ENCODE measurements at regions of chr1 and their contacts with region 1.

Region 1: DNA sequence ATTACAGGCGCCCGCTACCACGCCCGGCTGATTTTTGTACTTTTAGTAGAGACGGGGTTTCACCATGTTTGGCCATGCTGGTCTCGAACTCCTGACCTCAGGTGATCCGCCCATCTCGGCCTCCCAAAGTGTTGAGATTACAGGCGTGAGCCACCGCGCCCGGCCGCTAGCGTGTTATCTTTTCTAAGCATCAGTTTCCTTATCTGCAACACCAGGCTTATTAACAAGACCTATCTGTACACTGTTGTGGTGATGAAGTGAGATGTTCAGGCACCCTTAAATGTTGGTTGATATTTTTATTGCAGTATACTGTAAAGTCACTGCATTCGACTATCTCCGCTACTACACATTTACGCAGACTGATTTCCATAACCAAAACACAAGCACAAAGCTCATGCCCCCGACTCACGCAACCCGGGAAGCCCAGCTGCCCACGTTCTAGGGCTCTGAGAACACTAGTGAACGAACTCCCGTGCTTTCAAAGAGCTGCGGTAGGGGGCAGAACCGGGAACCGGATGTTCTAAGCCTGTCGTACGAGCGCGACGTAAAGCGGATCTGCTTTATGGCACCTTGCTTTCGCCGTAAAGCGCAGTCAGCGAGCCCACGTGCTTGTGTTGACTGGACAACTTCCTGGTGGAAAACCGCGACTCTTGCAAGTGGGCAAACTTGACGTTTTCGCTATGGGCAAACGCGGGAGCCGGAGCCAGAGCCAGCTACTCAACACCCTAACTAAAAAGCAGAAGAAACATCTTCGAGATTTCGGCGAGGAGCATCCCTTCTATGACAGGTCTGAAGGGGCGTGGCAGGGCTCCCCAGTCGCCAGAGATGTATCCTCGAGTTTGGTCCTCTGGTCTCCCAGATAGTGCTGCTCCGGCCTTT is at the start of gene UTP25:
- DNase-seq: peak; percentile 96
- ATAC-seq: peak; percentile 94
- H3K4me3 Mint-ChIP-seq: peak within 1 kb of the TSS; percentile 95
- H3K27ac Mint-ChIP-seq: peak within 1 kb of the TSS; percentile 86
- H3K4me1 Mint-ChIP-seq: peaks cover 33% of the 10 kb centered on the region
- H3K27me3 Mint-ChIP-seq: peaks cover 6% of the 10 kb centered on the region
- total RNA-seq, gene UTP25: 6.3 to 6.5 TPM

Region 2: DNA sequence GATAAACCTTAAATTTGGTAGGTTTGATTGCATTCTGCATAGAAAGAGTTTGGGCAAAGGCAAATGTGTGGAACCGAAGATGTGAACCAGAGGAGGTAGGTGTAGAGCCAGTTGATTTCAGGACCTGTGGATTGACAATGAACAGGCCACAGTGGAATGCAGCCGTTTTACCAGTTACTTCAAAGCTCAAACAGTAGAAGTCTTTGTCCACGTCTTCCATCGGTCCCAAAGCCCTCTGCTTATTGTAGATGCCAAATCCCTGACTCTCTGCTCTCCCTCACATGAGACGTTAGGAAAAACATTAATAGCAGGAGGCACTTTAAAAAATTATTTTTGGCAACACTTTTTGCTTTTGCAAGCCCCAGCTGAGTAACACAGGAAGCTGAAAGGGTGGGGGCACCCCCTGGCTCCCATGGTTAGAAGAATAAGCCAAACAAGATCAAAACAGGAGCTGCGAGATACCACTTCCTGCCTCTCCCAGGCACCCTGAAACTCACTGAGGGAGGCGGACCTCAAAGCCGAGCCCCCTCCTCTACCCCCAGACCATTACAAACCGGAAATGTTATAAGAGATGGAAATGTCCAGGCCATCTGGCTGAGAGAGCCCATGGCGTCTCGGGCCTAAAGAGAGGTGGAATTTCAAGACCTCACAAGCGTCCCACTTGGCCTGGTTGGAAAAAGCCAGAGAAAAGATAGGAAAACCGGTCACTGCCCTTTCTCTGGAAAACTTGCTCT is 58.3 kb before region 1 on chr1:
- CTCF ChIA-PET with region 1: interaction called, 13 read pairs
- POLR2A ChIA-PET with region 1: interaction called, 5 read pairs
- DNase-seq: peak; percentile 89
- ATAC-seq: peak; percentile 58
- H3K4me3 Mint-ChIP-seq: no peak overlapping the region
- H3K27ac Mint-ChIP-seq: no peak overlapping the region
- H3K4me1 Mint-ChIP-seq: peaks cover 36% of the 10 kb centered on the region
- H3K27me3 Mint-ChIP-seq: no peaks in the 10 kb centered on the region

Region 3: GRCh38 chr1:209784265-209785169 is 43.1 kb before region 1 on chr1 and contains the start of gene C1orf74:
- CTCF ChIA-PET with region 1: interaction called, 42 read pairs
- POLR2A ChIA-PET with region 1: interaction called, 3 read pairs
- DNase-seq: peak; percentile 99
- ATAC-seq: peak; percentile 99
- H3K4me3 Mint-ChIP-seq: peak within 1 kb of the TSS; percentile 94
- H3K27ac Mint-ChIP-seq: peak within 1 kb of the TSS; percentile 99
- H3K4me1 Mint-ChIP-seq: peaks cover 50% of the 10 kb centered on the region
- H3K27me3 Mint-ChIP-seq: no peaks in the 10 kb centered on the region
- total RNA-seq, gene C1orf74: 2.5 to 2.6 TPM

Region 4: GRCh38 chr1:209790286-209791193 is 37.1 kb before region 1 on chr1:
- CTCF ChIA-PET with region 1: interaction called, 42 read pairs
- POLR2A ChIA-PET with region 1: no interaction called
- DNase-seq: no peak
- ATAC-seq: no peak
- H3K4me3 Mint-ChIP-seq: no peak overlapping the region
- H3K27ac Mint-ChIP-seq: no peak overlapping the region
- H3K4me1 Mint-ChIP-seq: peaks cover 13% of the 10 kb centered on the region
- H3K27me3 Mint-ChIP-seq: peaks cover 2% of the 10 kb centered on the region

Region 5: DNA sequence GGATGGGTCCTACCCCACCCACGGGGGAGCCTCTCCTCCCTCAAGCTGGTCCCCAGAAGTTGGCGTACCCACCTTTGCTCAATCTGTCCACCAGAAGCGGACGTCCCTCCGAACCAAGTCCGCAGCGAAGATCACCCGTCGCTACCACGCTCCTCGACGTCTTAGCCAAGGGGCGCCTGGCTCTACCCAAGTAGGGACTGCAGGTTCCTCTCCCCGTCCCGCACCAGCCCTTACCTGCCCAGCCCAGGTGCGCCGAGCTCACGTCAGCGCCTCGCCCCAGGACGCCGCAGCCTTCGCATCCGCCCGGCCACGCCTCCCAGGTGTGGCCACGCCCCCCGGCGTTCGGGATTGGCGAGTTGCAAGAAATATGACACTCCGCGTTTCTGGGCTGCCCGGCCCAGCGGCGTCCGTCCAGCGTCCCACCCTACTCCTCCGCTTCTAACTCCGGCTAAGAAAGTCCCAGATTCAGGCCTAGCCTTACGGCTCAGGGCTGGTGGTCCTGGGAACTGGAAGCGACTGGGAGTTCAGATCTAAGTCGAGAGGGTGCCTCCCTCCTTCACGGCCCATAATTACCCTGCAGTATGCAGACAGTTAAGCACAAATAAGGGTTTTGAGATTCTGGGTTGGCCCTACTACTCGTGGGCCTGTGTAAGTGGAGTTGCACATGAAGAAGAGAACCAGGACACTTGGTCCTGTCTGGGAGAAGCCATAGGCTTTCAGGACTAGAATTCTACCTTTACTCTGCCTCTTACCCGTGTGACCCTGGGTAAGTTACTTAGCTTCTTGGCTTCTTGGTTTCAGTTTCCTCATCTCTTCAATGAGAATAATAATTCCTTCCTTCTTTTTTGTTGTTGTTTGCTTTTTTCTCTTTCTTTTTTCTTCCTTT is 21.5 kb before region 1 on chr1 and contains the start of gene IRF6:
- CTCF ChIA-PET with region 1: interaction called, 61 read pairs
- POLR2A ChIA-PET with region 1: no interaction called
- DNase-seq: peak; percentile 71
- ATAC-seq: peak; percentile 89
- H3K4me3 Mint-ChIP-seq: peak within 1 kb of the TSS; percentile 77
- H3K27ac Mint-ChIP-seq: peak within 1 kb of the TSS; percentile 84
- H3K4me1 Mint-ChIP-seq: peaks cover 11% of the 10 kb centered on the region
- H3K27me3 Mint-ChIP-seq: peaks cover 17% of the 10 kb centered on the region
- total RNA-seq, gene IRF6: 0.16 to 0.21 TPM

Region 6: GRCh38 chr1:209815931-209816341 is 11.7 kb before region 1 on chr1:
- CTCF ChIA-PET with region 1: interaction called, 61 read pairs
- POLR2A ChIA-PET with region 1: no interaction called
- DNase-seq: no peak
- ATAC-seq: no peak
- H3K4me3 Mint-ChIP-seq: no peak overlapping the region
- H3K27ac Mint-ChIP-seq: no peak overlapping the region
- H3K4me1 Mint-ChIP-seq: no peaks in the 10 kb centered on the region
- H3K27me3 Mint-ChIP-seq: peaks cover 20% of the 10 kb centered on the region

Region 7: DNA sequence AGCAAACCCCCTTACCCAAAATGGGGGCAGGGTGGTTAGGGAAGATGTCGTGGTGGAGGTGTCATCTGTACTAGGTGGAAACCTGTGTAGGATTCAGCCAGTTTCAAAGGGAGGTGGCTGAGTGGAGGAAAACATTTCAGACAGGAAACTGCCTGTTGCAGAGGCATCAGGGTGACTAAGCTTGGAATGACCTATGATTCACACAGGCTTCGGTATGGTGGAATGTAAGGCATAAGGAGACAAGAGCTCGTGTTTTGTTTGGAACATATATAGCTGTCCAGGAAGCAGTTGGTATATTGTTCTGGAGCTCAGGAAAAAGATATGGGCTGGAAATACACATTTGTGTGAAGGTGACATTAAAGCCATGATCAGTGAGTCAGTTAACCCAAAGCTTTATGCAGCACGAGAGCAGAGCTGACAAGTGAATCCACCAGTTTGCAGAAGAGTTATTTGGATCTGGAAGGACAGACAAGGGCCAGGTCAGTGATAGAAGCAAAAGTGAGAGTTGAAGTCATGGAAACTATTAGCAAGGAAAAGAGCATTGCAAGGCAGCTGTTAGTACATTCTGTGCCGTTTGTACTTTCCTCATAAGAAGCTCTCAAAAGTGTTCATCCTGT is 12.4 kb after region 1 on chr1:
- CTCF ChIA-PET with region 1: interaction called, 45 read pairs
- POLR2A ChIA-PET with region 1: interaction called, 3 read pairs
- DNase-seq: no peak
- ATAC-seq: no peak
- H3K4me3 Mint-ChIP-seq: no peak overlapping the region
- H3K27ac Mint-ChIP-seq: peak overlapping the region; percentile 4
- H3K4me1 Mint-ChIP-seq: no peaks in the 10 kb centered on the region
- H3K27me3 Mint-ChIP-seq: no peaks in the 10 kb centered on the region

Measured in activated CD8-positive, alpha-beta T cell treated with anti-CD3 and anti-CD28 coated beads, Interleukin-2, amount 10 ng/mL, durations not matched to agents 7 days and 5 days (primary cell).